ENCODE measurements at regions of chr10 and their contacts with region 1.

Region 1: GRCh38 chr10:70115948-70116682 is 16.5 kb downstream of the AIFM2 start:
- DNase-seq: peak; percentile 68
- H3K4me3 Mint-ChIP-seq: no peak overlapping the region
- H3K27ac Mint-ChIP-seq: no peak overlapping the region
- H3K4me1 Mint-ChIP-seq: peaks cover 6% of the 10 kb centered on the region
- H3K27me3 Mint-ChIP-seq: no peaks in the 10 kb centered on the region
- CTCF ChIP-seq: peak; percentile 65

Region 2: DNA sequence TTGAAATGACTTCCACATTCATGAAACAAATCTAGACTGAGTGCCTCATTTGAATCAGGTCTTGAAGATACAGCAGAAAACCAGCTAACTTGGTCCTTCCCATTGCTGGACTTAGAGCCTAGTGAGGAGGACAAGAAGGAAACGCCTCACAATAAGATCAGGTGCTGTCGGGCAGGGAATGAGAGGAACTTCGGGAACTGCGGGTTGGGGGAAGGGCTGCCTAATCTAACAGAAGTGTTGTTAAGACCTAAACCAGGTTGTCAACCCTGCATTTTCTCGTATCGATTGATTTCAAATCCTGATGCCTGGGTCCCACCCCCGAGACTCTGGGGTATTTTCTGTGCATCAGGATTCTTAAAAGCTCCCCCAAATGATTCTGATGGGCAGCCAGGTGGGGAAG is 37.2 kb before region 1 on chr10:
- CTCF ChIA-PET with region 1: interaction called, 12 read pairs
- POLR2A ChIA-PET with region 1: no interaction called
- intact Hi-C with region 1: no loop called
- DNase-seq: no peak
- H3K4me3 Mint-ChIP-seq: no peak overlapping the region
- H3K27ac Mint-ChIP-seq: no peak overlapping the region
- H3K4me1 Mint-ChIP-seq: peaks cover 11% of the 10 kb centered on the region
- H3K27me3 Mint-ChIP-seq: no peaks in the 10 kb centered on the region
- CTCF ChIP-seq: no peak

Region 3: GRCh38 chr10:70093335-70093944 is 22.7 kb before region 1 on chr10:
- CTCF ChIA-PET with region 1: interaction called, 107 read pairs
- POLR2A ChIA-PET with region 1: interaction called, 4 read pairs
- intact Hi-C with region 1: no loop called
- DNase-seq: no peak
- H3K4me3 Mint-ChIP-seq: no peak overlapping the region
- H3K27ac Mint-ChIP-seq: no peak overlapping the region
- H3K4me1 Mint-ChIP-seq: no peaks in the 10 kb centered on the region
- H3K27me3 Mint-ChIP-seq: no peaks in the 10 kb centered on the region
- CTCF ChIP-seq: no peak

Region 4: DNA sequence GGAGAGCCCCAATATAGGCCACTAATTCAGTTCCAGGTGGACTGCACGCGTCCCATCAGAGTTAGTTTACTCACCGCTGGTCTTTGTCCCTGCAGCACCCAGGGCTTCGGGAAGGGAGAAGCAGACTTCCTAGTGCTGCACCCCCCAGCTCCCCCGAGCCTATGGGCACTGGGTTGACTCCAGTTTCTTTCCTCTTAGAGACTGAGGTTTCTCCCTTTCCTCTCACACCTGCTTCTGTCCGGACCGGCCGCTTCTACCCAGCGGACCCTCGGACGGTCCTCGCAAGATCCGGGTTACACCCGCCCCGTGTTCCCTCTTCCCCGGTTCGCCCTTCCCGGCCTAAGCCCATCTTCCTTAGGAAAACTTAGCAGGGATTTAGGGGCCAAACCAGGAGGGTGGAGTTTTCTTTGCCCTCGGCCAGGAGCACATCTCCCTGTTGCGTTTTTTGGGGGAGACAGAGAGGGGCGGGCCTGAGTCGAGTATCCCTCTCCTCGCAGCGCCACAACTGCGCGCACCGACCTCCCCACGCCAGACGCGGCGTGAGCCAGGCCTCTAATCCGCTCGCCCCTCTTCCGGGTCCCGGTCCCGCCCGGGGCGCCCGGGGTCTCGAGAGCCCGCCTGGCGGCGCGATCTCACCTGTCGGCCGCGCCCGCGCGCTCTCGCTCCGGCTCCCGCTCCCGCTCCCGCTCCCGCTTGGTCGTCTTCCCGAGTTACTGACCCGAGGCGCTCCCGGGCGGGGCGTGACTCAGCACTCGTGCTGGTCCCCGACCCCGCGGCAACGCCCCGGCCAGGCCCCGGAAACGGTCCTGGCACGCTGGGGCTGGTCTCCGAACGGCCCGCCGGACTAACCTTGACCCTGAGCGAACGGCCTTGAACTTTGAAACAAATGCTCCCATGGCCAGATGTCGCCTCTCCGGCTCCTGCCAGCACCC is 16.2 kb after region 1 on chr10 and contains the start of gene AIFM2:
- CTCF ChIA-PET with region 1: interaction called, 81 read pairs
- POLR2A ChIA-PET with region 1: interaction called, 6 read pairs
- intact Hi-C with region 1: no loop called
- DNase-seq: peak; percentile 81
- H3K4me3 Mint-ChIP-seq: peak within 1 kb of the TSS; percentile 81
- H3K27ac Mint-ChIP-seq: peak within 1 kb of the TSS; percentile 91
- H3K4me1 Mint-ChIP-seq: peaks cover 26% of the 10 kb centered on the region
- H3K27me3 Mint-ChIP-seq: no peaks in the 10 kb centered on the region
- CTCF ChIP-seq: no peak
- total RNA-seq, gene AIFM2: 19.2 and 21.9 TPM in 2 replicates